ENCODE measurements at regions of chr17 and their contacts with region 1.

Region 1: GRCh38 chr17:29760761-29761696 is 138.3 kb upstream of the CORO6 start:
- DNase-seq: peak; percentile 96

Region 2: GRCh38 chr17:29622337-29623282 is 138.4 kb before region 1 on chr17 and contains the start of gene CORO6:
- intact Hi-C with region 1: loop called (anchors 5 kb)
- DNase-seq: peak; percentile 80
- total RNA-seq, gene CORO6: 128 TPM

Region 3: DNA sequence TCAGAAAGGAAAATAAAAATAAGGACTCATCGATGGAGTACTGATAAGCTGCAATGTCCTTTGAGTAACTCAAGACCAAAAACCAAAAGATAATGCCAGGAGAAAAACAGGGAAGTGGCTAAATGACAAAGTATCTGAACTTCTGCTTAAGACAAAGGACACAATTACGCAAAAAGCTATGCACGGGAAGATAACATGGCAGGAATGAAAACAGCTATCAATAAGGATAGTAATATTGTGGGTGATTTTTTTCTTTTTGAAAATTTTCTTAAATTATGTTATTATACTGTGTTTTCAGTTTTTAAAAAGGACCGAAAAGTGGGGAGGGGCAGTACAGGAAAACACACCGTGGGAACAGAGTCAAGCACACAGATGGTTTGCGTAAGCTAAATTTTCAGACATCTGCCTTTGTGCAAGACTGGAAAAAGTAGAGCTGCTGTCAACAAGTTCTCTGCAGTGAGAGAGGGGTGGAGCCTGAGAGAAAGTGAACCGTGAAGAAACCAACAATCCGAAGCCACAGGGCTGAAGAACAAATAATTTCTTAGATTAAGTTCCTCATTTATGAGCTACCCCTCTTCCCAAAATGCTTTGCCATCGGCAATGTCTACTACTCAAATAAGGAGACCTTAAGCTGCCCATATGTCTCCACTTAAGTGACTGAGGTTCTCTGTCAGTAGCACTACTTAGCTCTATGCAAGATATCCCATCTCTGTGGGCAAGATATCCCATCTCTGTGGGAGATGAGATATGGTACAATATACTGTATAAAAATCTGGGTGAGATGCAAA is 38.4 kb before region 1 on chr17:
- intact Hi-C with region 1: loop called (anchors 5 kb)
- DNase-seq: peak; percentile 80

Region 4: GRCh38 chr17:29857823-29858222 is 96.8 kb after region 1 on chr17:
- intact Hi-C with region 1: no loop called
- DNase-seq: no peak

Measured in cardiac septum (tissue), 1 donor.